HCT116 (cell line): ENCODE measurements at regions of chr17 and their contacts with region 1.

Region 1: DNA sequence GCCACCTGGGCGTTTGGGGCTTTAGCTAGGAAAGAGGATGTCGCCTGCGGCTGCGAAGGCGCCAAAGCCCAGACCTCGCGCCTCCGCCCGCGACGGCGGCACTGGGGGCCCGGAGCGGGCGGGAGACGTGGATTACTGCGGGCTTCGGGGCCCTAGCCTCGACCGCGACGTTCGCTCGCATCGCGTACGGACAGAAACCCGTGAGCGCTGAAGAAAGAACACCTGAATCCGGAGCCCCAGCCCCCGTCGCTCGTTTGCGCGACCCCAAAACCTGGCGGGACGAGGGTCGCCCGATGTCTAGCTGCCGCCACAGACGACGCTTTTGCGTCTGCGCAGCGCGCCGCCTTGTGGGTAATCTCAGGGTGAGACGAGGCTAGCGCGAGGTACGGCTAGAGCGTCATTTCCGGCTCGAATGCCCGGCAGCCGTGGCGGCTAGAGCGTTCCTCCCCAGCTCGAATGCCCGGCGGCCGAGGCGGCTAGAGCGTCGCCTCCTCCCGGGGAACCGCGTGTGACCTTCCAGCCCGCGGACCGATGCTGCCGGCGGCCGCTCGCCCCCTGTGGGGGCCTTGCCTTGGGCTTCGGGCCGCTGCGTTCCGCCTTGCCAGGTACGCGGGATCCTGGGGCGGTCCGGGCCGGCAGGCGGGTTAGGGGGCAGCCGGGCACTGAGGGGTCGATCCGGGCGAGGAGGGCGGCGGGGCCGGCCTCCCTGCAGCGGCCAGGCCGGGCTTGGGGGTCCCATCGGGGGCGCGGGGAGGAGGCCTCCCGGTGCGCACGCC is at the start of gene MRPL12:
- DNase-seq: peak; percentile 90
- ATAC-seq: peak; percentile 79
- H3K4me3 ChIP-seq: peak within 1 kb of the TSS; percentile 68
- H3K27ac ChIP-seq: peak within 1 kb of the TSS; percentile 98
- H3K4me1 ChIP-seq: peaks cover 13 to 28% of the 10 kb centered on the region in 2 experiments
- H3K27me3 ChIP-seq: no peaks in the 10 kb centered on the region
- CTCF ChIP-seq: no peak
- POLR2A ChIP-seq: peak; percentile 91
- RAD21 ChIP-seq: no peak
- total RNA-seq, gene MRPL12: 260 TPM

Region 2: GRCh38 chr17:81683584-81684237 is 19.4 kb before region 1 on chr17 and contains the starts of genes ARL16 and HGS:
- CTCF ChIA-PET with region 1: no interaction called
- POLR2A ChIA-PET with region 1: interaction called, 33 read pairs
- RAD21 ChIA-PET with region 1: interaction called, 4 read pairs
- intact Hi-C with region 1: loop called (anchors 2 kb)
- DNase-seq: peak; percentile 100
- ATAC-seq: peak; percentile 95
- H3K4me3 ChIP-seq: peak within 1 kb of the TSS; percentile 86 to 99
- H3K27ac ChIP-seq: peak within 1 kb of the TSS; percentile 92
- H3K4me1 ChIP-seq: peaks cover 18 to 23% of the 10 kb centered on the region in 2 experiments
- H3K27me3 ChIP-seq: no peaks in the 10 kb centered on the region
- CTCF ChIP-seq: no peak
- POLR2A ChIP-seq: peak; percentile 66
- RAD21 ChIP-seq: no peak
- total RNA-seq, gene ARL16: 47.5 TPM
- total RNA-seq, gene HGS: 231 TPM

Region 3: DNA sequence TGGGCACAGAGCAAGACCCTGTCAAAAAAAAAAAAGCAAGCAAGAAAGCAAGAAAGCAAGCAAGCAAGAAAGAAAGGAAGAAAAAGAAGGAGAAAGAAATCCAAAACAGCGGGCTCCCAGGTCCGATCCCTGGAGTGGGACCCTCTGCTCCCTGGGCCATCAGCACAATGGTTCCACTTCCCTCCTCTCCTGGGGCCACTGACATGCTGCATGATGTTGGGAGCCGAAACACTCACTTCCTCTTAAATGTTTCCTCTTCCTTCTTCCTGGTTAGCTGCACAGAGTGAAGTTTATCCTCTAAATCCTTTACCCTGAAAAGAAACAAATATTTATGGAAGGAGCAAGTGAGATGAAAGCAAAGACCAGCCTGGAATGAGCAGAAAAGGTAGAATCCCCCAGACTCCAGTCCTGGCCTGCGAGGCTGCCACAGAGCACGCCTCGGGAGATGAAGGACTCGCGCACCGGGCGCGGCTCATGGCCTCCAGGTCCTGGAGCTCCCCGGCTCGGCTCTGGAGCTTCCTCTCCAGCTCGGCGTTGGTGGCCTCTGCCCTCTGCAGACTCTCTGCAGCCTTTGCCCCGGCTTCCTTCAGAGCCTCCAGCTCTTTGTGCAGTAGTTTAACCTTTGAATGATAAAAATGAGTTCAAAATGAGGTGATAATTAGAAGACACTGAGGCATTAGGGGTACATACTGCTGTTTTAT is 490.5 kb after region 1 on chr17:
- CTCF ChIA-PET with region 1: no interaction called
- POLR2A ChIA-PET with region 1: no interaction called
- RAD21 ChIA-PET with region 1: no interaction called
- intact Hi-C with region 1: no loop called
- DNase-seq: no peak
- ATAC-seq: no peak
- H3K4me3 ChIP-seq: no peak overlapping the region
- H3K27ac ChIP-seq: no peak overlapping the region
- H3K4me1 ChIP-seq: no peaks in the 10 kb centered on the region
- H3K27me3 ChIP-seq: no peaks in the 10 kb centered on the region
- CTCF ChIP-seq: no peak
- POLR2A ChIP-seq: no peak
- RAD21 ChIP-seq: no peak